ENCODE measurements at regions of chr17 and their contacts with region 1.

Region 1: DNA sequence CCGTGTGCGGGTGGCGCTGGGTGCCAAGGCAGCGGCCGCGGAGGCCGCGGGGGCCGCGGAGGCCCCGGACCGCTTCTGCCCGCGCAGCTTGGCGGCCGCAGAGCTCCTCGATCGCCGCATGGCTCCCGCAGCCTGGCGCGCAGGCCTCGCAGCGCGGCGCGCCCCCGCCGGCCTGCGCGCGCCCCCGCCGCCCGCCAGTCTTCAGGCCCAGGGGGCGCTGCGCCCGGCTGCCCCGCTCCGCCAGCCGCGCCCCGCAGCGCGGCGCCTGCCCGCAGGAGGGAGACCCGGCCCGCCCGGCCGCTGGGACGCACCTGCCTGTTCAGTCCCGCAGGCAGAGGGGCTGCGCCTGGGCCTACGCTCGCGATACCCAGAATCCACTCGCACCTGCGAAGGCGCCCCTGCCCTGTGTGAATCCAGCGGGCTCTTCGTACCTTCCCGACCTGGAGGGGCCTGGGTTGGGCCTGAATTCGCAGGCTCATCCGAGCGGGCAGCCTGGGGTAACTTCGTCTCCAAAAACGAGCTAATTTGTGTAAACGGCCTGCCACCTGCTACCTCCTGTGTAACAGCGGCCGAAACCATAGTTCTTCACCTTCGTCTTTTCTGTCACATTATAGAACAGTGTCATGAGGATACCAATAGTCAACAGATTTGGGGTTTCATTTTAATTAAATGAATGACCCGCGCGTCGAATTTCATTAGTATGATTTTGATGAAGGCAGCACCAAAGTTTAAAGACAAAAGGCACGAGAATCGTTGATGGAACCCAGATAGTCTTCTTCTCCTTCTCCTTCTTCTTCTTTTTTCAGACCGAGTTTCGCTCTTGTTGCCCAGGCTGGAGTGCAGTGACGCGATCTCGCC is at the start of gene CENPV:
- DNase-seq: peak; percentile 34
- ATAC-seq: peak; percentile 82
- H3K4me3 ChIP-seq: peak within 1 kb of the TSS; percentile 73
- H3K27ac ChIP-seq: peak within 1 kb of the TSS; percentile 33
- H3K4me1 ChIP-seq: 0 out of 2 replicates have a peak, but pooled peaks cover 2% of the 10 kb centered on the region
- H3K27me3 ChIP-seq: no peaks in the 10 kb centered on the region
- CTCF ChIP-seq: peak; percentile 37
- POLR2A ChIP-seq: no peak
- RAD21 ChIP-seq: no peak
- total RNA-seq, gene CENPV: 35.3 and 38.6 TPM in 2 replicates

Region 2: DNA sequence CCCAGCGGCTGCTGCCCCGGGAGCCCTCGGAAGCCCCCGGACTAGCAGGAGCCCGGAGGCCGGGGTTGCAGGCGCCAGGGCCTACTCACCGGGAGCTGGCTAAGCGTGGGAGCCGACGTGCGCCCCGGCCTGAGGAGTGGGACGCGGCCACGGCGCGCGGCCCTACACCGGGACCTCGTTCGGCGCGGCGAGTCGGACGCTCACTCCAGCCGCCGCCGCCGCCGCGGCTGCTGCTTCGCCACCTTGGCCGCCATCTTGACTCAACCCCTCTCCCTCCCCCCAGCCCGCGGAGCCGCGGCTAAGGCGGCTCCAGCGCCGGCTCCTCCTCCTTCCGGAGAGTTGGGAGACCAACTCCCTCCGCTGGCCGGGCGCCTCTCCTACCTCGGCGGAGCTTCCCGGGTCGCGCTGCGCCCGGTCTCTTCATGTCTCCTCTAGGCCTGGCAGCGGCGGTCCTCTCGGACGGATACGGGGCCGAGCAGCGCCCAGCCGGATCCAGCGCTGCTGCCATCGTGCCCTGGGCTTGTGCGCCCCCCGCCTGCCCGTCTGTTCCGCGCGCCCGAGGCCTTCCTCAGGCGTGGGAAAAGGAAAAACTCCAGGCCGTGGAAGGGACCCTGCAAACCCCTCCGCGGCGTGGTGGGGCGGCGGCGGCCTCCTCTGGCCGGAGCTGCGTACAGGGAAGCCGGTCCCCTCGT is 138.1 kb before region 1 on chr17 and contains the start of gene NCOR1:
- CTCF ChIA-PET with region 1: no interaction called
- POLR2A ChIA-PET with region 1: no interaction called
- dilution Hi-C with region 1: no loop called
- in situ Hi-C with region 1: no loop called
- intact Hi-C with region 1: loop called (anchors 5 kb)
- DNase-seq: peak; percentile 93
- ATAC-seq: peak; percentile 95
- H3K4me3 ChIP-seq: peak within 1 kb of the TSS; percentile 71
- H3K27ac ChIP-seq: peak within 1 kb of the TSS; percentile 87
- H3K4me1 ChIP-seq: peaks cover 6% of the 10 kb centered on the region
- H3K27me3 ChIP-seq: no peaks in the 10 kb centered on the region
- CTCF ChIP-seq: peak; percentile 43
- POLR2A ChIP-seq: peak; percentile 86
- RAD21 ChIP-seq: peak; percentile 23
- total RNA-seq, gene NCOR1: 78.0 and 80.3 TPM in 2 replicates

Region 3: GRCh38 chr17:16363749-16364536 is 10.4 kb after region 1 on chr17:
- CTCF ChIA-PET with region 1: interaction called, 19 read pairs
- POLR2A ChIA-PET with region 1: no interaction called
- dilution Hi-C with region 1: no loop called
- in situ Hi-C with region 1: no loop called
- intact Hi-C with region 1: no loop called
- DNase-seq: peak; percentile 69
- ATAC-seq: peak; percentile 99
- H3K4me3 ChIP-seq: no peak overlapping the region
- H3K27ac ChIP-seq: no peak overlapping the region
- H3K4me1 ChIP-seq: no peaks in the 10 kb centered on the region
- H3K27me3 ChIP-seq: no peaks in the 10 kb centered on the region
- CTCF ChIP-seq: peak; percentile 90
- POLR2A ChIP-seq: no peak
- RAD21 ChIP-seq: peak; percentile 77

Region 4: DNA sequence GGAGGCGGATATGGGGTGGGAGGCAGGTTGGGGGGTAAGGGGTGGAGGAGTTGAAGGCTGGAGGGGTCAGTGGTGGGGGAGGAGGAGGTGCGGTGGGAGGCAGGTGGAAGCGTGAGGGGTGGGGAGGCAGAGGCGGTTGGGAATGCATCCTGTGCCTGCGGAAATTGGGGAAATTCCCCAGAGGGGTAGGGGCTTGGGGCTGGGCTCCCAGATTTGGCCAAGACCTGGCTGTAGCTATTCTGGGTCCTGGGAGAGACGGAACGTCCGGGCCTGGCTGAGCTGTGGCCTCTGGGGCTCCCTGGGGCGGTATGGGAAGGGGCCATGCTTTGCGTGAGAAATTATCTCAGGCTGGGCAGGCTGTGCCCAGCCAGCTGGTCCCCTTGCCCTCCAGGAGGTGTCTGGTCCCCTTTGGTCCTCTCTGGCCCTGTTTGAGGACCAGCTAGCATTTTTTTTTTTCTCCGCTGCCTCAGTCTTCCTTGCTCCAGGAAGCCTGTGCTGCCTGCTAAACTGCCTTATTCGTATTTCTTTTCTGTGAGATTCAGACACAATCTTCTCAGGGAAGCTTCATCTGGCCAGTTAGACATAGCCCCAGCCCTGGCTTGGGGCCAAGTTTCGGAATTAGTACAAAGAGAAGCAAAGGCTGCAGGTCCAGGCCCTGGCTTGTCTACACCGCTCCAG is 54.5 kb after region 1 on chr17:
- CTCF ChIA-PET with region 1: no interaction called
- POLR2A ChIA-PET with region 1: no interaction called
- dilution Hi-C with region 1: no loop called
- in situ Hi-C with region 1: no loop called
- intact Hi-C with region 1: no loop called
- DNase-seq: peak; percentile 47
- ATAC-seq: no peak
- H3K4me3 ChIP-seq: no peak overlapping the region
- H3K27ac ChIP-seq: no peak overlapping the region
- H3K4me1 ChIP-seq: peaks cover 2% of the 10 kb centered on the region
- H3K27me3 ChIP-seq: no peaks in the 10 kb centered on the region
- CTCF ChIP-seq: no peak
- POLR2A ChIP-seq: no peak
- RAD21 ChIP-seq: no peak

Region 5: DNA sequence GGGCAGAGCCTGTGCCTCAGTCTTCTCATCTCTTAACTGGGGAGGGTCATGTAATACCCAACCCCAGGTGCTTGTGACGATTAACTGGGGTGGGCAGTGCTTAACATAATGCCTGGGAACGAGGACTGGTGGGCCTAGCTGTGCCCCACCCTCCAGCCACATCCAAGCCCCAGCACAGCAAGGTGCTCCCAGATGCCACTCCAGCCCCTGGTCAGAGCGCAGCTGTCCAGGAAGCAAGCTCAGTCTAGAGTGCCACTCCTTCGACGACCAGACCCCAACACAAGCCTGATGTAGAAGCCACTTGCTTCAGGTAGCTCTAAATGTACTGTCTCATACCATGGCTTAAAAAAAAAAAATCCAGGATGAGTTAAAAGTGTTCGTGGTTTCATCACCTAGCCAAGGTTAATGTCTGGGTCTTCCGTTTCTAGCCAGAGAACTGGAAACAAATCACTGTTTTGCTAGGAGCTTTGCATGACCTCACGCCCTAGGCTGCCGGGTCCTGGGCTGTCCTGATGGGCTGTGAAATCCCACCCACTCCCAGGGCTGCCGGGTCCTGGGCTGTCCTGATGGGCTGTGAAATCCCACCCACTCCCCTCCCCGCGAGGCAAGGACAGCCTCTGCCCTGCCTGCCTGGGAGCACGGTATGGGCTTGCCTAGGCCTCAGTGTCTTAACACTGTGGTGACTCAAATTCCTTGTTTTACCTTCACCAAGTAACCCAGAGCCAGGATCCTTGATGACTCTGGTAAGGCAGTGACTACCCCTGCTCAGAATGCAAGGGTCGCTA is 1914.6 kb after region 1 on chr17:
- CTCF ChIA-PET with region 1: no interaction called
- POLR2A ChIA-PET with region 1: no interaction called
- dilution Hi-C with region 1: no loop called
- in situ Hi-C with region 1: no loop called
- intact Hi-C with region 1: no loop called
- DNase-seq: peak; percentile 73
- ATAC-seq: peak; percentile 85
- H3K4me3 ChIP-seq: no peak overlapping the region
- H3K27ac ChIP-seq: no peak overlapping the region
- H3K4me1 ChIP-seq: peaks cover 13% of the 10 kb centered on the region
- H3K27me3 ChIP-seq: no peaks in the 10 kb centered on the region
- CTCF ChIP-seq: no peak
- POLR2A ChIP-seq: no peak
- RAD21 ChIP-seq: no peak